ENCODE measurements at regions of chr2 and their contacts with region 1.

Region 1: GRCh38 chr2:96213379-96213778 is 4.8 kb upstream of the STARD7 start:
- DNase-seq: no peak
- ATAC-seq: no peak
- H3K4me3 ChIP-seq: no peak overlapping the region
- H3K27ac ChIP-seq: no peak overlapping the region
- H3K4me1 ChIP-seq: peaks cover 0 to 19% (median 10%) of the 10 kb centered on the region in 12 donors
- H3K27me3 ChIP-seq: no peaks in the 10 kb centered on the region
- CTCF ChIP-seq: no peak
- POLR2A ChIP-seq: no peak

Region 2: GRCh38 chr2:95685513-95685912 is 527.9 kb before region 1 on chr2:
- intact Hi-C with region 1: no loop called
- DNase-seq: no peak
- ATAC-seq: no peak
- H3K4me3 ChIP-seq: no peak overlapping the region
- H3K27ac ChIP-seq: no peak overlapping the region
- H3K4me1 ChIP-seq: peaks cover 0 to 20% (median 6%) of the 10 kb centered on the region in 12 donors
- H3K27me3 ChIP-seq: no peaks in the 10 kb centered on the region
- CTCF ChIP-seq: no peak
- POLR2A ChIP-seq: no peak

Region 3: DNA sequence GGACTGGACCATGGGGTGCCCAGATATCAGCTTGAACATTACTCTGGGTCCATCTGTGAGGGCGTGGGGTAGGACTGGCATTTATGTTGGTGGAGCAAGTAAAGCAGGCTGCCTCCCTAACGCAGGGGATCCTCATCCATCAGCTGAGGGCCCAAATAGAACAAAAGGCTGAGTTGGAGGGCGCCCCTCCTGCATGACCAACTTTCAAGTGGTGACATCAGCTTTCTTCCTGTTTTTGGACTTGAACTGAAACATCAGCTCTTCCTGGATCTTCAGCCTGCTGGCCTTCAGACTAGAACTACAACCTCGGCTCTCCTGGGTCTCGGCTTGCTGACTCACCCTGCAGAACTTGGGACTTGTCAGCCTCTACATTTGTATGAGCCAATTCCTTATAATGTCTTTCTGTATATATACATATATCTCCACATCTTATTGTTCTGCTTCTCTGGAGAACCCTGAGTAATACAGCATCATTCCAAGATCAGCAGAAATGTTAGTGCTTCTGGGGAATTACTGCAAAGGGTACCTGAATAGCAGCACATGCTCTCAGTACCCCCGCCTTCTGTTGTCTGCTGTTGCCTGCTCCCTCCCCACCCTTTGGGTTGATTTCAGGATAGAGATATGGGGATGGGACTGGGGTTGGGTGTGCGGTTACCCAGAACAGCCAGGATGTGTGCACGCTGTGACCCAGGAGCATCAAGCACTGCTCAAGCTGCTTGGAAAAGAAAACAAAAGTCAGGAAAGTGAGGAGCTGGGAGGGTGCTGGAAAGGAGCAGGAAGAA is 32.4 kb after region 1 on chr2:
- intact Hi-C with region 1: loop called in 5 of 10 experiments (anchors 5 kb)
- DNase-seq: no peak
- ATAC-seq: peak in 3 of 4 donors; percentile 3 to 16 (median 6)
- H3K4me3 ChIP-seq: no peak overlapping the region
- H3K27ac ChIP-seq: peak overlapping the region in 2 of 12 donors; percentile 15 to 89
- H3K4me1 ChIP-seq: peaks cover 0 to 83% (median 31%) of the 10 kb centered on the region in 12 donors
- H3K27me3 ChIP-seq: no peaks in the 10 kb centered on the region
- CTCF ChIP-seq: no peak
- POLR2A ChIP-seq: no peak

Region 4: GRCh38 chr2:96251721-96252292 is 38.4 kb after region 1 on chr2:
- intact Hi-C with region 1: loop called in 5 of 10 experiments (anchors 5 kb)
- DNase-seq: peak in 4 of 5 donors; percentile 55 to 82 (median 68)
- ATAC-seq: peak; percentile 71 to 77 (median 74)
- H3K4me3 ChIP-seq: peak overlapping the region in 1 of 12 donors; percentile 18
- H3K27ac ChIP-seq: peak overlapping the region in 11 of 12 donors; percentile 59 to 96 (median 71)
- H3K4me1 ChIP-seq: peaks cover 2 to 88% (median 67%) of the 10 kb centered on the region in 12 donors
- H3K27me3 ChIP-seq: no peaks in the 10 kb centered on the region
- CTCF ChIP-seq: no peak
- POLR2A ChIP-seq: peak in 1 of 2 donors; percentile 13

Region 5: DNA sequence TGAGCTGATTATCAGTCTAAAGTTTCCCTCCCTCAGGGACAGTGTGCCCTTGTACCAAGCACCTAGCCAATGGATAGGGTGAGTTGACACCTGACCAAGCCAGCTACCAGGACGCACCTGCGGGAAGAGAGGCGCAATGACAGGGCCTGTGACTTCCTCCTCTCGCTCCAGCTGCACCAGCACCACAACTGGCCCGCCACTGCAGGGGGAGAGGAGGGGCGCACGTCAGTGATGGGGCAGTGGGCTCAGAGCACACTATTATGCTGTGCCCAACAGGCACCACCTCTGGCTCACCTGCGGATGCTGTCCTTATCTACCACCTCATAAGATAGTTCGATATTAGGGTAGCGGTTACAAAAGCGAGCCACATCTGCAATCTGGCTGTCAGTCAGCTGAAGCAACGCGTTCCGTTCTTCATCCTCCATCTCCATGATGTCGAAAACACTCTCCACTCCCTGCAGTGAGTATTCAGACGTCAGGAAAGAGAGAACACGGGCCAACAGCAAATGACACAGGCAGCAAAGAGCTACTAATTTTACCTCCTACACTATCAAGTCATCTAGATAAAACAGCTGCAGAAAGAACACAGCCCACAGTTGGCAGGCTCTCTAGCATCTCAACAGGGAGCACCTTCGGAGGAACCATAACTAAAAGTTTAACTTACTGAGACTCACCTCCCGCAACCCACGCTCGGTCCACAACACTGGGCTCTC is 63.6 kb after region 1 on chr2:
- intact Hi-C with region 1: no loop called
- DNase-seq: no peak
- ATAC-seq: peak in 1 of 4 donors; percentile 12
- H3K4me3 ChIP-seq: no peak overlapping the region
- H3K27ac ChIP-seq: no peak overlapping the region
- H3K4me1 ChIP-seq: no peaks in the 10 kb centered on the region
- H3K27me3 ChIP-seq: no peaks in the 10 kb centered on the region
- CTCF ChIP-seq: no peak
- POLR2A ChIP-seq: no peak

Measured in heart left ventricle (tissue), 16 donors.